Sigmoid colon (tissue), 7 donors: ENCODE measurements at regions of chr15 and their contacts with region 1.

Region 1: GRCh38 chr15:30953731-30954378 is 37.6 kb downstream of the MTMR10 start:
- DNase-seq: no peak
- H3K4me3 ChIP-seq: no peak overlapping the region
- H3K27ac ChIP-seq: no peak overlapping the region
- H3K4me1 ChIP-seq: no peaks in the 10 kb centered on the region
- H3K27me3 ChIP-seq: no peaks in the 10 kb centered on the region
- CTCF ChIP-seq: no peak
- EP300 ChIP-seq: no peak
- POLR2A ChIP-seq: no peak

Region 2: GRCh38 chr15:30913771-30914170 is 40.1 kb before region 1 on chr15:
- intact Hi-C with region 1: loop called (anchors 5 kb)
- DNase-seq: no peak
- H3K4me3 ChIP-seq: no peak overlapping the region
- H3K27ac ChIP-seq: no peak overlapping the region
- H3K4me1 ChIP-seq: no peaks in the 10 kb centered on the region
- H3K27me3 ChIP-seq: no peaks in the 10 kb centered on the region
- CTCF ChIP-seq: no peak
- EP300 ChIP-seq: no peak
- POLR2A ChIP-seq: no peak